MCF 10A (cell line): ENCODE measurements at regions of chr7 and their contacts with region 1.

Region 1: GRCh38 chr7:155344600-155345433 is 47.1 kb downstream of the INSIG1 start:
- DNase-seq: peak; percentile 60
- H3K4me3 Mint-ChIP-seq: no peak overlapping the region
- H3K27ac Mint-ChIP-seq: no peak overlapping the region
- H3K4me1 Mint-ChIP-seq: peaks cover 4% of the 10 kb centered on the region
- H3K27me3 Mint-ChIP-seq: peaks cover 11% of the 10 kb centered on the region
- CTCF ChIP-seq: peak; percentile 92

Region 2: GRCh38 chr7:154919344-154920225 is 425.2 kb before region 1 on chr7:
- CTCF ChIA-PET with region 1: interaction called, 15 read pairs
- POLR2A ChIA-PET with region 1: no interaction called
- intact Hi-C with region 1: no loop called
- DNase-seq: peak; percentile 3
- H3K4me3 Mint-ChIP-seq: no peak overlapping the region
- H3K27ac Mint-ChIP-seq: no peak overlapping the region
- H3K4me1 Mint-ChIP-seq: peaks cover 6% of the 10 kb centered on the region
- H3K27me3 Mint-ChIP-seq: no peaks in the 10 kb centered on the region
- CTCF ChIP-seq: no peak

Region 3: GRCh38 chr7:155003376-155004214 is 341.2 kb before region 1 on chr7:
- CTCF ChIA-PET with region 1: interaction called, 4 read pairs
- POLR2A ChIA-PET with region 1: interaction called, 3 read pairs
- intact Hi-C with region 1: loop called (anchors 10 kb)
- DNase-seq: peak; percentile 76
- H3K4me3 Mint-ChIP-seq: peak overlapping the region; percentile 88
- H3K27ac Mint-ChIP-seq: peak overlapping the region; percentile 87
- H3K4me1 Mint-ChIP-seq: no peaks in the 10 kb centered on the region
- H3K27me3 Mint-ChIP-seq: no peaks in the 10 kb centered on the region
- CTCF ChIP-seq: no peak

Region 4: GRCh38 chr7:155190688-155191087 is 154.1 kb before region 1 on chr7:
- CTCF ChIA-PET with region 1: interaction called, 50 read pairs
- POLR2A ChIA-PET with region 1: interaction called, 5 read pairs
- intact Hi-C with region 1: loop called (anchors 1 kb)
- DNase-seq: peak; percentile 46
- H3K4me3 Mint-ChIP-seq: no peak overlapping the region
- H3K27ac Mint-ChIP-seq: no peak overlapping the region
- H3K4me1 Mint-ChIP-seq: peaks cover 5% of the 10 kb centered on the region
- H3K27me3 Mint-ChIP-seq: no peaks in the 10 kb centered on the region
- CTCF ChIP-seq: peak; percentile 85

Region 5: DNA sequence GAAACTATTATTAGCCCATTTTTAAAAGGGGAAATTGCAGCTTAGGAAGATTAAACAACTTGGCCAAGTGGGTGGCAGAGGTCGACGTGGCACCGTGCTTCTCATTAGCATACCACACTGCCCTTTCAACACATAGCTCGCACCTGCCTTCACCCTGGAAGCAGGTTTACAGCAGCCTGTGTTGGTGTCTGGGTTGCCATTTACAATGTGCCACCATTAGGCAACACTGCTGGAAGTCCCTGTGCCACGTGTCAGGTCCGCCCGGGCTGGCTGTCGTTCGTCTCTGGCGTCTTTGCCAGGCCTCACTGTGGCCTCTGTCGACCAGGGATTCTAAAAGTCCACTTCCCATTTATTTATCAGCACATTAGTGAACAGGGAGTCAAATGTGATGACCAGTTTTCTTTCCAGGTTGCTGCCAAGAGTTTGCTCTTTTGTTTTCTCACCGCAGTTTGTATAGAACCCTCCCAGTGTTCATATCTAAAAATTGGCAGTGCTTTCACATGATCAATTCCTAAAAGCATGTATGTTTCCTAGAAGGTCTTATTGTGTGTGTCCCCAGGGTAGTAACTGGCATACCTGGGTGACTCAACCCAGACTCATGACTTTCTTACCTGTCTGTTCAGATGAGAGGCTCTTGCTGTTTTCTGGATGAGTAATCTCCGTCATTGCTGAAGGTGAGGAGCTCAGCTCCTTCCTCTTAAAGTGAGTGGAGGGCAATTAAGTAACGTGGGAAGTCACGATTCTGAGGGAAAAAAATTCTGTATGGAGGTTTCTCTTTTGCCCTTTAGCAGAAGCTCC is 37.9 kb before region 1 on chr7:
- CTCF ChIA-PET with region 1: interaction called, 12 read pairs
- POLR2A ChIA-PET with region 1: no interaction called
- intact Hi-C with region 1: no loop called
- DNase-seq: peak; percentile 82
- H3K4me3 Mint-ChIP-seq: peak overlapping the region; percentile 25
- H3K27ac Mint-ChIP-seq: peak overlapping the region; percentile 75
- H3K4me1 Mint-ChIP-seq: peaks cover 9% of the 10 kb centered on the region
- H3K27me3 Mint-ChIP-seq: no peaks in the 10 kb centered on the region
- CTCF ChIP-seq: no peak

Region 6: GRCh38 chr7:155333346-155334234 is 11.2 kb before region 1 on chr7:
- CTCF ChIA-PET with region 1: interaction called, 22 read pairs
- POLR2A ChIA-PET with region 1: no interaction called
- intact Hi-C with region 1: no loop called
- DNase-seq: no peak
- H3K4me3 Mint-ChIP-seq: no peak overlapping the region
- H3K27ac Mint-ChIP-seq: no peak overlapping the region
- H3K4me1 Mint-ChIP-seq: no peaks in the 10 kb centered on the region
- H3K27me3 Mint-ChIP-seq: peaks cover 10% of the 10 kb centered on the region
- CTCF ChIP-seq: no peak